Activated B cell treated with CpG ODN at 0.5 μM for 24 hours (primary cell): ENCODE measurements at regions of chr5 and their contacts with region 1.

Region 1: DNA sequence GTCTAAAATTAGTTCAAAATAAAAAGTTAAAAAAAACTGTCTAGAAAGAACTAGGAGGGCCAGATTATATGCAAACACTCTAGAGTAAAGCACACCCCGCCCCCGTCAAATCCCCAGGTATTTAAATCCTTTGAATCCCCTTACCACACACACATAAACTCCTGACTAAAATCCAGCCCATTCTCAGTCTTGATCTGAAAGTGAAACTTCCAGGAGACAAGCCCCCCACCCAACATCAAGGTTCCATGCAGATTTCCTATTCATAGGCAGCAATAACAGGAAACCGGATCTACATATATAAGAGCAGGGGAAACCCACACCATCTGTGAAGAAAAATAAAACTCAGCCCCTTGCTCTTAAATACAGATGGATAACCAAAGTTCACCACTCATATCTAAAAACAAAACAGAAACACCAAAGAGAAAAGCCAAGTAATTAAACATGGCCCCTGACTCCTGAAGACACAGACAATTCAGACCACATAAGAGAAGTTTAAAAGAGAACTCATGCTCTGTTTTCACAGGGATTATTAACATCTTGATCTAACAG is 42.3 kb downstream of the MARCHF3 start:
- DNase-seq: no peak
- ATAC-seq: peak; percentile 84
- H3K4me3 Mint-ChIP-seq: peak overlapping the region; percentile 82
- H3K27ac Mint-ChIP-seq: peak overlapping the region; percentile 97
- H3K4me1 Mint-ChIP-seq: peaks cover 88% of the 10 kb centered on the region
- H3K27me3 Mint-ChIP-seq: no peaks in the 10 kb centered on the region
- CTCF ChIP-seq: no peak

Region 2: DNA sequence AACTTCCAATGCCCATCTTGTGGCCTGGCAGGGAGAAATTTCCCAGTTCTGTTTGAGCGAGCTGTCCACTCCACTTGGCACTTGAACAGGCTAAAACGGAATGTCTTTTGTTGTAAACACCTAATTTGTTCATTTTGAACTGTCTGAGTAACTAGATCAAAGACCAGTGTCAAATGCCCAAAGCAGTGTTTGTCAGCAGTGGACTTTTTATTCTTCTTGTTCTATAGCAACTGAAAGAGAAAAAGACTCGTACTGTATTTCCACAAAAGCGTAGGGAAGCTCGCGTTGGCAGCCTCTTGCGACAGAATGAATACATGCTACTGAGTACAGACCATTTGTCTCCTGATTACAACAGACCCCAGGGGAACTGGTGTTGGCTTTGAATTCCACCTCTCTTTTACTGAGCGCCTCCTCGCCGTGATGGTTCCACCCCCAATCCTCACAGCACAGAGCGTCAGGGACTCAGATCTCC is 1639.8 kb before region 1 on chr5:
- CTCF ChIA-PET with region 1: no interaction called
- POLR2A ChIA-PET with region 1: no interaction called
- intact Hi-C with region 1: no loop called
- DNase-seq: no peak
- ATAC-seq: no peak
- H3K4me3 Mint-ChIP-seq: no peak overlapping the region
- H3K27ac Mint-ChIP-seq: no peak overlapping the region
- H3K4me1 Mint-ChIP-seq: no peaks in the 10 kb centered on the region
- H3K27me3 Mint-ChIP-seq: no peaks in the 10 kb centered on the region
- CTCF ChIP-seq: no peak

Region 3: DNA sequence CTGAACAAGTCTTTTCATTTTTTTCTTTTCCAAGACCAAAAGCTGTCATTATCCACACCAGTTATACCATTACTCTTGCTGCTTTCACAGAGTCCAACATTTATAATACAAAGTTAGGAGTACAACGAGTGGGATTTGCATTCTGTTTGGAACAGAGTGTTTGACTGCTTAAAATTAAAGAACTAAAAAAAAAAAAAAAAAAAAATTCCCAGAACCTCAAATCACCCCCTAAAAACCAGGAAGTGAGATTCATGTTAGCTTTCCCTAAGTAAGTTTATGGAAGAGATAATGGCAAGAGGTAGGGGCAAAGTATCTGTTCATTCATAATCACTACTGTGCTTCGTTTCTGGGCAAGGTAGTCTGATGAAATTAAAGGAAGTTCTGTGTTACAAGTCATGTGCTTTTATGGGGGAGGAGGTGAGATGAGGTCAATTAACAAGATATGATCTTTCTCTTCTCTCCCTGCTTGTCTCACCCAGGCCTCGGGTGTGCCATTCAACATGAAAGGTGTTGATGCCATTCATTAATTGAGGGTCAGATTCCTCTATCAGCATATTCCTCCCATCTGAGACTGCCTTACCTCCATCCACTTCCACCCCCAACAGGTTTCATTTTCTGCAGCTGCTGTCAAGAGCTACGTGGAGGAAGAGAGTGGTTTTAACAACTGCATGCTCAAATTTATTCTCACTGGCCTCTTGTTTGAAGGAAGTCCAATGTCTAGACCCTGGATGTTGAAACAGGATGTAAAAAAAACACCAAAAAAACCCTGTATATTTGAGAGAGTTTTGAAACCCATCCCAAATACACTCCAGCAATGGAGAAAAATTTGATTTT is 15.8 kb before region 1 on chr5:
- CTCF ChIA-PET with region 1: no interaction called
- POLR2A ChIA-PET with region 1: interaction called, 7 read pairs
- intact Hi-C with region 1: loop called (anchors 1 kb)
- DNase-seq: peak; percentile 29
- ATAC-seq: peak; percentile 77
- H3K4me3 Mint-ChIP-seq: peak overlapping the region; percentile 84
- H3K27ac Mint-ChIP-seq: peak overlapping the region; percentile 100
- H3K4me1 Mint-ChIP-seq: peaks cover 77% of the 10 kb centered on the region
- H3K27me3 Mint-ChIP-seq: no peaks in the 10 kb centered on the region
- CTCF ChIP-seq: no peak

Region 4: GRCh38 chr5:127079994-127080491 is 91.9 kb after region 1 on chr5:
- CTCF ChIA-PET with region 1: no interaction called
- POLR2A ChIA-PET with region 1: no interaction called
- intact Hi-C with region 1: no loop called
- DNase-seq: no peak
- ATAC-seq: no peak
- H3K4me3 Mint-ChIP-seq: no peak overlapping the region
- H3K27ac Mint-ChIP-seq: no peak overlapping the region
- H3K4me1 Mint-ChIP-seq: peaks cover 4% of the 10 kb centered on the region
- H3K27me3 Mint-ChIP-seq: no peaks in the 10 kb centered on the region
- CTCF ChIP-seq: no peak